HEK293 (cell line): ENCODE measurements at regions of chr17 and their contacts with region 1.

Region 1: GRCh38 chr17:22704672-22705071 is 1012.3 kb downstream of the KCNJ18 start:
- H3K4me3 ChIP-seq: no peak overlapping the region
- H3K27ac ChIP-seq: no peak overlapping the region
- H3K4me1 ChIP-seq: no peaks in the 10 kb centered on the region
- CTCF ChIP-seq: no peak

Region 2: DNA sequence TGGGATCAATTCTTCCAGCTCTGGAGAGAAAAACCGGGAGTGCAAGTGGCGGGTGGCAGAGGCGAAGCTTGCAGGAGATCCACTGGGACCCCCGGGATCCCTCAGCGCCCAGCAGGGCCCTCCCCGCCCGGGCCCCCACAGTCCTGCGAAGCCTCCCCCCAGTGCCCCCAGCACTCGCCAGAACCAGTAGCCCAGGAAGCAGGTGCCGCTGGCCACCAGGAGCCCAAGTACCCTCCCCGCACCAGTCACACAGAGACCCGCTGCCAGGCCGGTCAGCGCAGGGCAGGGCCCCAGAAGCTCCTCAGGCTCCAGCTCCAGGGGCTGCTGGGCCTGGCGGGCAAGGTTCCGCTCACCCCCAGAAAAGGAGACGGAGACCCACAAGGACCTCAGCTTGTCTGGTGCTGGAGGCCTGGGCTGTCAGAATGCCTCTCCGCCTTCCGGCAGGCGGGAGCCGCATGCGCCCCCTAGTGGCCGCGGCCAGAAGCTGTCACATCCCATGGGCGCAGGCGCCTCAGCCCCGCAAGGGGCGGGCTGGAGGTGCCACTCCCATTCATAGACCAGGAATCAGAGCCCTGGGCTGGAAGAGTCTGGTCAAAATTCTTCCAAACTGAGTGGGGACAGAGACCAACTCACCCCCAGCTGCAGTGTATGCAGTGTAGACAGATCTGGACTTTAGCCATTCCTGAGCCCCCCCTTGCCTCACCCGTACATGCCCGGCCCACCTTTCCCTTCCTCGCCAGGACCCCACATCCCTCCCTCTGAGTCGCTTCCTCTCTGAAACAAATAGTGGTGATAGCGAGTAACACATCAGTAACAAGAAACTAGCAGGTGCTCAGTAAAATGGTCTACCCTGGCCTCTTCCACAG is 10.1 kb before region 1 on chr17:
- CTCF ChIA-PET with region 1: interaction called, 10 read pairs
- POLR2A ChIA-PET with region 1: no interaction called
- H3K4me3 ChIP-seq: no peak overlapping the region
- H3K27ac ChIP-seq: no peak overlapping the region
- H3K4me1 ChIP-seq: no peaks in the 10 kb centered on the region
- CTCF ChIP-seq: no peak